Lower lobe of right lung (tissue), 2 donors: ENCODE measurements at regions of chr17 and their contacts with region 1.

Region 1: GRCh38 chr17:47315451-47316266 is 8.1 kb upstream of the EFCAB13 start:
- DNase-seq: no peak
- ATAC-seq: peak; percentile 86 to 90
- H3K4me3 ChIP-seq: no peak overlapping the region
- H3K27ac ChIP-seq: no peak overlapping the region
- H3K4me1 ChIP-seq: peaks cover 11% of the 10 kb centered on the region
- H3K27me3 ChIP-seq: no peaks in the 10 kb centered on the region
- CTCF ChIP-seq: peak; percentile 87

Region 2: DNA sequence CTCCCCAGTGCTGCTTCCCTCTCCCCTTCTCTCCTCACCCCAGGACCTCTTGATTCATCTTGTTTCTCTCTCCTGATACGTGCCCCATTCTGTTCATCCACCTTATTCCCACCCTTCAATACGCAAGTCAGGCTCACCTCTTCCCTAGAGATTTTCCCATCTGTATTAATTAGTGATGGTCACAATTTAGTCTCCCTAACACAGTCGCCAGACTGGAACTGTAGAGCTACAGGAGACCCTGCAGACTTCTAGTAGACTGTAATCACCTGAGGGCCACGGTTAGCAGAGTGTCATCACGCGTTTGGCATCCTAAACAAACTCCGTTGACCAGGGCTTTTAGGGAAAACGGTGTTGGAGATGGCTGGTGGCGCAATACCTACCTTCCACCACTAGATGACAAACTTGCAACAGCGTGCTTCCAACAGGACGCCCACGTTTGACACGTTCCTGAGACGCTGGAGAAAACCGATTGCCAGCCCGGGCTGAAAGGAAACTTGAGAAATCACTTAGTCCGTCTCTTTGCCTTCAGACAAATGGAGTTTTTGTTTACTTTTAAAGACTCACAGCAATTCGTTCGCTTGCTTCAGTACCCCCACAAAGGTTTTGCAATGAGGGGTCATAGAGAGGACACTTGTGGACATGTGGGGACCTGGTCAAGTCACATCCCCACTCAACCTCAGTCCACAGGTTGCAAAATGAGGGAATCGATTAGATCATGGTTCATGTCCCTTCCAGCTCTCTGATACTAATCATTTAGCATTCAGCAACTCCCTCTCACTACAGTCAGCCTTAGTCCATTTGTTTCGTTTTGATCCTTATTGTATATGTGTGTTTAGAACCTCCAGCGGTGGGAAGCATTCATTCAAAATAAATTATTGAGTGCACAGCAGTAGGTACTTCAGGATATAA is 85.9 kb before region 1 on chr17:
- intact Hi-C with region 1: loop called (anchors 5 kb)
- DNase-seq: peak; percentile 82
- ATAC-seq: peak; percentile 91 to 93
- H3K4me3 ChIP-seq: peak overlapping the region; percentile 25
- H3K27ac ChIP-seq: no peak overlapping the region
- H3K4me1 ChIP-seq: peaks cover 19% of the 10 kb centered on the region
- H3K27me3 ChIP-seq: no peaks in the 10 kb centered on the region
- CTCF ChIP-seq: peak; percentile 96